ENCODE measurements at regions of chr6 and their contacts with region 1.

Region 1: DNA sequence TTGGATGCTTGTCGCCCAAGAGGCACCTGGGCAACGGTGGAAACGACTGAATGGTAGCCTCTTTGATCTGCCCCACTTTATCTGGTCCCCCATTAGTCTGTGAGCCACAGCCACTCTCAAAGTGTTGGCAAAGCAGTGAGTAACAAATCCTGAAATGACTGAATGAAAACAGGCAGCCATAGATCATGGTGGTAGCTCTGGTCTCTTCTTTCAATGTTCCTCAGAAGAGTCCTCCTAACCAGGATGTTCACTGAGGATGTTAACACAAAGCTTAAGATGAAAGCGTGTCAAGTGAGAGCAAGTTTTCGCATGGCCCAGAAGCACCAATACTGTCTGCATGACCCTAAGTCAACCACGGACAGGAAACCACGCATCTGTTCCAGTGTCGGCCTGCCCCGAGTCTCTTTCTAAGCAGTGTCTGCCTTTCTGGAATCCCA is 107.3 kb downstream of the IRF4 start:
- DNase-seq: peak in 6 of 9 experiments; percentile 12 to 70 (median 28)
- ATAC-seq: peak; percentile 55
- H3K4me3 ChIP-seq: no peak overlapping the region
- H3K4me3 Mint-ChIP-seq: peak overlapping the region; percentile 49
- H3K27ac ChIP-seq: peak overlapping the region in 1 of 2 experiments; percentile 73
- H3K27ac Mint-ChIP-seq: peak overlapping the region; percentile 83
- H3K4me1 ChIP-seq: peaks cover 41% of the 10 kb centered on the region
- H3K4me1 Mint-ChIP-seq: peaks cover 58% of the 10 kb centered on the region
- H3K27me3 ChIP-seq: no peaks in the 10 kb centered on the region
- H3K27me3 Mint-ChIP-seq: no peaks in the 10 kb centered on the region
- CTCF ChIP-seq: no peak

Region 2: DNA sequence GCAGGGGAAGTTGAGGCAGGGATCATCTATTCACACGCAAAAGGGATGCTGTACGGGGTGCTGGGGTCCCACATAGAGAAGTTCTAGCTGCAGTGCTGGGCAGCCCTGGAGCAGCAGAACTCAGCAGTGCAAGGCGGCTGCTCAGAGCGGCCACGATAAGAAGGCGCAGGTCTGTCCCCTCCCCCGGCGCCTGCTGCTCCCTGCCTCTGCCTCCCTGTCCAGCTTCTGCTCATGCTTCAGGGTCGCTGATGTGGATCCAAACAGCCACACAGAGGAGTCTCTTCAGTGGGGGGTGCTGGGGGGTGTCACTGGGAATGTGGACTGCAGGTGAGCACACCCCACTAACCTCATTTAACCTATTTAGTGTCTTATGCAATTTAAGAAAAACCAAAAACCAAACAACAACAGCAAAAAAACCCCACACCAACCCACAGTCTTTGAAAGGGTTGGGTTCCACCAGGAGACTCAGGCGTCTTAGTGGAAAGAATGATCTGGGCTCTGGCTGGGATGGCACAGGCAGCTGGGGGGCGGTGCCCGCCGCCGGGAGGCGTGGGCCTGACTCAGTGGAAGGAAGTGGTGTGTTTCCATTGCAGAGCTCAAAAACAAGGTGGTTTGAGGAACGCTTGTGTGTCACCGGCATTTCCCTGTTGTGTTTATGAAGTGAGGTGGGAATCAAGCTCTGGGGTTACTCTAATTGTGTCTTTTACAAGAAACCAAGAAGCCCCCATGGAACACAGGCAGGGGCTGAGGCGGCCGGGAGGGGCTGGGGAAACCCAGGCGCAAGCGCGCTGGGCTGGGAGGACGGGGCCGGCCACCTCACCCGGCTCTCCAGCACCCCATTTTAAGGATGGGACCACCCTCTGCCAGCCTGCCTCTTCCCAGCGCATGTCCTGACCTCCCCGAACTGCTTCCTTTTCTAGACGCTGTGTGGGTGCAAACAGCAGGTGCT is 52.1 kb before region 1 on chr6:
- CTCF ChIA-PET with region 1: no interaction called
- POLR2A ChIA-PET with region 1: interaction called, 3 read pairs
- intact Hi-C with region 1: loop called in 1 of 2 experiments (anchors 2 kb)
- DNase-seq: peak in 8 of 9 experiments; percentile 72 to 90 (median 80)
- ATAC-seq: peak; percentile 76
- H3K4me3 ChIP-seq: peak overlapping the region; percentile 37 to 43
- H3K4me3 Mint-ChIP-seq: peak overlapping the region; percentile 71
- H3K27ac ChIP-seq: no peak overlapping the region
- H3K27ac Mint-ChIP-seq: peak overlapping the region; percentile 88
- H3K4me1 ChIP-seq: peaks cover 43% of the 10 kb centered on the region
- H3K4me1 Mint-ChIP-seq: peaks cover 48% of the 10 kb centered on the region
- H3K27me3 ChIP-seq: no peaks in the 10 kb centered on the region
- H3K27me3 Mint-ChIP-seq: no peaks in the 10 kb centered on the region
- CTCF ChIP-seq: no peak

Region 3: DNA sequence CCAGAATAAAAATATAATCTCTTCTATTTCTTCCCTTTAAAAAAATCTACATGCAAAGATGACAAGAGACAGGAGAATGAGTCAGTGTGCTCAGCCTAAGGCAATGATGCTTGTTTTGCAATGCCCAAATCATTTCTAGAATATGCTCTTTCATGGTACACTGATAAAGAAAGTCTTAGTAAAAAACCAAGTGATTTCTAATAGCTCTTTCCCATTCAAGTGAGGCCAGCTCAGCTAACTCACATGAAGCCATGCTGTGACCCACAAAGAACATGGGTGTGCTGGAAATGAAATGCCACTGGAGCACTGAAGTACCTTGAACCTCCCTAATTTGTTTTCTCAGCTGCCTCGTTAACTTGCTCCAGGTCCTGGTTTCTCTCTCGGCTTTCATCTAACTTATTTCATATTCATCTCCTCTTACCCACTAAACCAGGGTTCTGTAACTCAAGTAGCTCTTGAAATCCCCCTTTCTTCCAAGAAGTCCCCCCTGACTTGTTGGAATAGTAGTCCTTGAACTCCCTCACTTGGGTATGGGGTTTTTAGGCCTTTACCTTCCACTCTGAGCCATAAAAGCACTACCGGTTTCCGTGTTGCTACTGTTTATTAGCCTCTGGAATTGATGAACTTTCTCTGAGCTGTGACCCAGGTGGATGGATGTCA is 14.6 kb before region 1 on chr6:
- CTCF ChIA-PET with region 1: no interaction called
- POLR2A ChIA-PET with region 1: interaction called, 10 read pairs
- intact Hi-C with region 1: no loop called
- DNase-seq: no peak
- ATAC-seq: no peak
- H3K4me3 ChIP-seq: no peak overlapping the region
- H3K4me3 Mint-ChIP-seq: no peak overlapping the region
- H3K27ac ChIP-seq: no peak overlapping the region
- H3K27ac Mint-ChIP-seq: no peak overlapping the region
- H3K4me1 ChIP-seq: peaks cover 8% of the 10 kb centered on the region
- H3K4me1 Mint-ChIP-seq: peaks cover 23% of the 10 kb centered on the region
- H3K27me3 ChIP-seq: no peaks in the 10 kb centered on the region
- H3K27me3 Mint-ChIP-seq: no peaks in the 10 kb centered on the region
- CTCF ChIP-seq: no peak

Region 4: DNA sequence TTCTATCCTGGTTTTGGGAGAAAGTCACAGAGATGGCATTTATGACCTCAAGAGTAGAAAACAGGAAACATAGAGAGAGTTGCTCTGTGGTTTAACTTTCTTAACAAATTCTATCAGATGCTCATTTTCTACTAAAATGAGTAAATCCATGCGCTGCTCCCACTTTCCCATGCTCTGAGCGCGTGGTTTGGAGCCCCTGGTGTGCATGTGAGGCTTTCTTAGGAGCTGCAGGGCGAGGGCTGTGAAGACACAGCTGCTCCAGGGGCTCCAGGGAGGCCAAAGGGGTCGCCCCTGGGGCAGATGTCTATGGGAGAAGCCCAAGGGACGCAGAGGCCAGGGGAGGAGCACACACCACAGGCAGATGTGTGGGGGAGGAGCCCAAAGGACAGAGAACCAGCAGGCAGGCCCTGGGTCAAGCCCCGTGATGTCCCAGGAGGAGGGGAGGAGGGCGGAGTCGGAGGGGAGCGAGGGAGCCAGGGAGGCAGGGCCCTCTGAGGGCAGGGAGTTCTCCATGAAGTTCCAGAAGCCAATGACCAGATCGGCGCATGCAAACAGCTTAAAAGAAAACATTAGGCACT is 15.7 kb after region 1 on chr6:
- CTCF ChIA-PET with region 1: no interaction called
- POLR2A ChIA-PET with region 1: no interaction called
- intact Hi-C with region 1: no loop called
- DNase-seq: no peak
- ATAC-seq: no peak
- H3K4me3 ChIP-seq: no peak overlapping the region
- H3K4me3 Mint-ChIP-seq: no peak overlapping the region
- H3K27ac ChIP-seq: no peak overlapping the region
- H3K27ac Mint-ChIP-seq: peak overlapping the region; percentile 67
- H3K4me1 ChIP-seq: peaks cover 28% of the 10 kb centered on the region
- H3K4me1 Mint-ChIP-seq: peaks cover 44% of the 10 kb centered on the region
- H3K27me3 ChIP-seq: no peaks in the 10 kb centered on the region
- H3K27me3 Mint-ChIP-seq: no peaks in the 10 kb centered on the region
- CTCF ChIP-seq: no peak